AG04449 (cell line): ENCODE measurements at regions of chr15 and their contacts with region 1.

Region 1: GRCh38 chr15:69735121-69735520 is 282.5 kb downstream of the RPLP1 start:
- DNase-seq: no peak
- H3K4me3 ChIP-seq: no peak overlapping the region
- CTCF ChIP-seq: no peak

Region 2: DNA sequence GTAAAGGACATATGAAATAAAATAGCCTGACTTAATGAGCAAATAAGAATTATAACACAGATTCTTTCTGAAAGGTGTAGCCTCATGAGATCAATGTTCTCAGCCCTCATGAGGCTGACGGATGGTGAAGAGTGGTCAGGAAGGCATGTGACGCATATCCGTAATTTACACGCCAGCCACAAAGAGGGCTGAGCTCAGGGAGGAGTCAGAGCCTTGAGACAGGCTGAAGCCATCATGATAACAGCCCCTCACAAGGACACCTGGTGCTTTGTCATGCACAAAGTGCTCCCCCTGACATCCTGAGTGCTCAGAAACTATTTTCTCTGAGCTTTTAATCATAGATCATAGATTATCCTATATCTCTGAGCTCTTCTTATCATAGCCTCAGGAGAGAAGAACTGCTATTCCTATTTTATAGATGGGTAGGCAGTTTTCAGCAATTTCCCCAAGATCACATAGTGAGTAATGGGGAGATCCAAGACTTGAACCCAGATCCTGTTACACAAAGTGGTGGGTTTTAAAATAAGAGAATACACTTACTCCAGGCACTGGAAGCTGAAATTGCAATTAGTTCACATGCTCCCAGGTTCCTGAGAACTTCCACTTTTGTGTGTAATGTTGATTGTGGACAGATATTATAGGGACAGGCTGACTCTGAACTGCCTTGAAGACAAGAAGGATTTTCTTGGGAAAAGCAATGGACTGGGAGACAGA is 15.4 kb before region 1 on chr15:
- CTCF ChIA-PET with region 1: interaction called, 11 read pairs
- POLR2A ChIA-PET with region 1: no interaction called
- DNase-seq: no peak
- H3K4me3 ChIP-seq: no peak overlapping the region
- CTCF ChIP-seq: no peak